Ovary (tissue), 10 donors: ENCODE measurements at regions of chr1 and their contacts with region 1.

Region 1: GRCh38 chr1:225474986-225475820 is 47.4 kb upstream of the LBR start:
- DNase-seq: peak; percentile 61 to 88 (median 74)
- H3K4me3 ChIP-seq: no peak overlapping the region
- H3K27ac ChIP-seq: no peak overlapping the region
- H3K4me1 ChIP-seq: no peaks in the 10 kb centered on the region
- H3K27me3 ChIP-seq: no peaks in the 10 kb centered on the region
- CTCF ChIP-seq: peak; percentile 99 to 100 (median 100)
- EP300 ChIP-seq: no peak
- POLR2A ChIP-seq: peak; percentile 62

Region 2: GRCh38 chr1:225548140-225548857 is 73.1 kb after region 1 on chr1:
- intact Hi-C with region 1: loop called in 1 of 4 experiments (anchors 10 kb)
- DNase-seq: no peak
- H3K4me3 ChIP-seq: no peak overlapping the region
- H3K27ac ChIP-seq: no peak overlapping the region
- H3K4me1 ChIP-seq: peaks cover 2% of the 10 kb centered on the region
- H3K27me3 ChIP-seq: no peaks in the 10 kb centered on the region
- CTCF ChIP-seq: no peak
- EP300 ChIP-seq: no peak
- POLR2A ChIP-seq: no peak

Region 3: GRCh38 chr1:225772323-225772768 is 297.1 kb after region 1 on chr1:
- intact Hi-C with region 1: loop called (anchors 2 to 5 kb)
- DNase-seq: peak; percentile 82 to 90 (median 86)
- H3K4me3 ChIP-seq: no peak overlapping the region
- H3K27ac ChIP-seq: peak overlapping the region in 1 of 2 donors; percentile 17
- H3K4me1 ChIP-seq: peaks cover 29% of the 10 kb centered on the region
- H3K27me3 ChIP-seq: no peaks in the 10 kb centered on the region
- CTCF ChIP-seq: peak; percentile 41 to 92 (median 81)
- EP300 ChIP-seq: no peak
- POLR2A ChIP-seq: no peak

Region 4: GRCh38 chr1:225845571-225846259 is 370.5 kb after region 1 on chr1:
- intact Hi-C with region 1: loop called in 3 of 4 experiments (anchors 5 to 10 kb)
- DNase-seq: peak; percentile 82 to 87 (median 85)
- H3K4me3 ChIP-seq: no peak overlapping the region
- H3K27ac ChIP-seq: peak overlapping the region; percentile 9 to 50
- H3K4me1 ChIP-seq: peaks cover 12% of the 10 kb centered on the region
- H3K27me3 ChIP-seq: no peaks in the 10 kb centered on the region
- CTCF ChIP-seq: peak; percentile 74 to 87 (median 84)
- EP300 ChIP-seq: no peak
- POLR2A ChIP-seq: peak; percentile 13

Region 5: GRCh38 chr1:225911191-225912130 is 436.3 kb after region 1 on chr1:
- intact Hi-C with region 1: loop called (anchors 2 to 5 kb)
- DNase-seq: peak; percentile 61 to 86 (median 80)
- H3K4me3 ChIP-seq: no peak overlapping the region
- H3K27ac ChIP-seq: no peak overlapping the region
- H3K4me1 ChIP-seq: peaks cover 2% of the 10 kb centered on the region
- H3K27me3 ChIP-seq: no peaks in the 10 kb centered on the region
- CTCF ChIP-seq: peak; percentile 83 to 87 (median 85)
- EP300 ChIP-seq: no peak
- POLR2A ChIP-seq: no peak

Region 6: DNA sequence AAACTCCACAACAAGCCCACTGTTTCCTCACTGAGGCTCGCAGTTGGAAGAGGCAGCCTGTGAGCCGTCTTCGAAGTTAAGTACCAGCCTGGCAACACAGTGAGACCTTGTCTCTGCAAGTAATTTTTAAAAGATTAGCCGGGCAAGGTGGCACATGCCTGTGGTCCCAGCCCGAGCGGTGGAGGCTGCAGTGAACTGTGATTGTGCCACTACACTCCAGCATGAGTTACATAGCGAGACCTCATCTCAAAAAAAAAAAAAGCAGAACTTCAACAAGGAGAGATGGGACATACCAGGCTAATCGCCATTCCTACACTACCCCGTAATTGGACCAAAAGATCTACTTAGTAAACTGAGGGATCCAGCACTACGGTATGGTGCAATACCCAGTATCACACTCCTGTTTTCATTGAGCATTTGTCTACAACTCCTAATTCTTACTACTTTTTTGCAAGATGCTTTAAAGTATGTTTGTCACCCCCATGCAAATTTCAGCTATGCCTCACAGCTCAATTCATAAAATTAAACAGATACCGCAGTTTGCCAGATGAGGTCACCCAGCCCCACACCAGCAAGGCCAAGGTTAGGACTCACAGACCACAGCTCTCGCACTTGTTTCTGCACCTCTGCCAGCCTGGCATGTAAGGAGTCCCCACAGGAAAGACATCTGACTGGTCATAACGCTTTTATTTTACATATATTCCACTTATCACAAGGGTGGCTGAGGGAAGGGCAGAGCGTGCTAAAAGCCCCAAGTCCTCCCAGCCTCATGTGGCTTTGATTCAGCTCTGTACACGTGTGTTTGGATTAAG is 502.9 kb after region 1 on chr1:
- intact Hi-C with region 1: loop called (anchors 2 kb)
- DNase-seq: peak in 1 of 5 donors; percentile 6
- H3K4me3 ChIP-seq: no peak overlapping the region
- H3K27ac ChIP-seq: no peak overlapping the region
- H3K4me1 ChIP-seq: peaks cover 3% of the 10 kb centered on the region
- H3K27me3 ChIP-seq: no peaks in the 10 kb centered on the region
- CTCF ChIP-seq: no peak
- EP300 ChIP-seq: no peak
- POLR2A ChIP-seq: no peak